Lower leg skin (tissue), 4 donors: ENCODE measurements at regions of chr18 and their contacts with region 1.

Region 1: GRCh38 chr18:69208545-69208944 is 192.1 kb upstream of the DOK6 start:
- DNase-seq: no peak
- H3K4me3 ChIP-seq: no peak overlapping the region
- CTCF ChIP-seq: no peak
- POLR2A ChIP-seq: no peak

Region 2: GRCh38 chr18:69143084-69143483 is 65.5 kb before region 1 on chr18:
- intact Hi-C with region 1: no loop called
- DNase-seq: no peak
- H3K4me3 ChIP-seq: no peak overlapping the region
- CTCF ChIP-seq: no peak
- POLR2A ChIP-seq: no peak

Region 3: GRCh38 chr18:69261436-69261835 is 52.9 kb after region 1 on chr18:
- intact Hi-C with region 1: loop called (anchors 2 kb)
- DNase-seq: no peak
- H3K4me3 ChIP-seq: no peak overlapping the region
- CTCF ChIP-seq: no peak
- POLR2A ChIP-seq: no peak